Stomach (tissue), 19 donors: ENCODE measurements at regions of chr2 and their contacts with region 1.

Region 1: GRCh38 chr2:96509114-96509846 is 4.1 kb upstream of the NEURL3 start:
- DNase-seq: peak; percentile 94 to 95
- H3K4me3 ChIP-seq: no peak overlapping the region
- H3K27ac ChIP-seq: no peak overlapping the region
- H3K4me1 ChIP-seq: peaks cover 10 to 35% (median 28%) of the 10 kb centered on the region in 4 donors
- H3K27me3 ChIP-seq: peaks cover 0 to 3% (median 0%) of the 10 kb centered on the region in 3 donors
- CTCF ChIP-seq: peak in 5 of 7 experiments; percentile 97 to 99 (median 99)
- EP300 ChIP-seq: no peak
- POLR2A ChIP-seq: no peak

Region 2: GRCh38 chr2:96407041-96407918 is 102.0 kb before region 1 on chr2:
- intact Hi-C with region 1: loop called (anchors 5 kb)
- DNase-seq: peak; percentile 63 to 92
- H3K4me3 ChIP-seq: no peak overlapping the region
- H3K27ac ChIP-seq: peak overlapping the region in 2 of 5 donors; percentile 16 to 20
- H3K4me1 ChIP-seq: peaks cover 17 to 33% (median 28%) of the 10 kb centered on the region in 4 donors
- H3K27me3 ChIP-seq: no peaks in the 10 kb centered on the region
- CTCF ChIP-seq: peak in 5 of 7 experiments; percentile 65 to 84 (median 71)
- EP300 ChIP-seq: no peak
- POLR2A ChIP-seq: no peak